ENCODE measurements at regions of chr4 and their contacts with region 1.

Region 1: DNA sequence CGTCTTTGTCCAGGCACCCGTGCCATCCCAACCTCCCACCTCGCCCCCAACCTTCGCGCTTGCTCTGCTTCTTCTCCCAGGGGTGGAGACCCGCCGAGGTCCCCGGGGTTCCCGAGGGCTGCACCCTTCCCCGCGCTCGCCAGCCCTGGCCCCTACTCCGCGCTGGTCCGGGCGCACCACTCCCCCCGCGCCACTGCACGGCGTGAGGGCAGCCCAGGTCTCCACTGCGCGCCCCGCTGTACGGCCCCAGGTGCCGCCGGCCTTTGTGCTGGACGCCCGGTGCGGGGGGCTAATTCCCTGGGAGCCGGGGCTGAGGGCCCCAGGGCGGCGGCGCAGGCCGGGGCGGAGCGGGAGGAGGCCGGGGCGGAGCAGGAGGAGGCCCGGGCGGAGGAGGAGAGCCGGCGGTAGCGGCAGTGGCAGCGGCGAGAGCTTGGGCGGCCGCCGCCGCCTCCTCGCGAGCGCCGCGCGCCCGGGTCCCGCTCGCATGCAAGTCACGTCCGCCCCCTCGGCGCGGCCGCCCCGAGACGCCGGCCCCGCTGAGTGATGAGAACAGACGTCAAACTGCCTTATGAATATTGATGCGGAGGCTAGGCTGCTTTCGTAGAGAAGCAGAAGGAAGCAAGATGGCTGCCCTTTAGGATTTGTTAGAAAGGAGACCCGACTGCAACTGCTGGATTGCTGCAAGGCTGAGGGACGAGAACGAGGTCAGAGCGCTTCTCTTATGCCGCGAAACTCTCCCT is at the start of gene TET2:
- DNase-seq: peak; percentile 86
- H3K4me3 Mint-ChIP-seq: peak within 1 kb of the TSS; percentile 99
- H3K27ac Mint-ChIP-seq: peak within 1 kb of the TSS; percentile 98
- H3K4me1 Mint-ChIP-seq: peaks cover 32% of the 10 kb centered on the region
- H3K27me3 Mint-ChIP-seq: no peaks in the 10 kb centered on the region
- total RNA-seq, gene TET2: 25.0 to 25.9 TPM

Region 2: GRCh38 chr4:105162123-105162796 is 15.8 kb after region 1 on chr4:
- CTCF ChIA-PET with region 1: no interaction called
- POLR2A ChIA-PET with region 1: interaction called, 13 read pairs
- DNase-seq: no peak
- H3K4me3 Mint-ChIP-seq: no peak overlapping the region
- H3K27ac Mint-ChIP-seq: no peak overlapping the region
- H3K4me1 Mint-ChIP-seq: no peaks in the 10 kb centered on the region
- H3K27me3 Mint-ChIP-seq: no peaks in the 10 kb centered on the region

Region 3: DNA sequence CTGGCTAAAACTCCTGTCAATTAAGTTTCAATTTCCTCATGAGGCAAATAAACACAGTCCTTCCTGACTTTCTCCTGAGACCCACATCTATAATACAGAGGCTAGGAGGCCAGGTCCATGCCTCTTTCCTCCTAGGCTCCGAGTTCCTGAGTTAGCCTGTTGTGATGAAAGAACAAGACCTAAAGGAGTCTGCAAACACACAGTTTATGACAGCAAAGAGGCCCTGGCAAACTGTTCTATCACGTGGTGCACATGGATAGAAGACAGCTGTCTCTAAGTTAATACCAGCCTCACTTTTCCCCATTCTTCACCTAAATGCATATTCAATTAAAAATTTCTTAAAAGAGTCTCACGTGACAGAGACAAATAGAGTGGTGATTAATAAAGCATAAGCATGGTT is 145.5 kb after region 1 on chr4:
- CTCF ChIA-PET with region 1: no interaction called
- POLR2A ChIA-PET with region 1: no interaction called
- DNase-seq: no peak
- H3K4me3 Mint-ChIP-seq: no peak overlapping the region
- H3K27ac Mint-ChIP-seq: no peak overlapping the region
- H3K4me1 Mint-ChIP-seq: peaks cover 5% of the 10 kb centered on the region
- H3K27me3 Mint-ChIP-seq: no peaks in the 10 kb centered on the region

Region 4: DNA sequence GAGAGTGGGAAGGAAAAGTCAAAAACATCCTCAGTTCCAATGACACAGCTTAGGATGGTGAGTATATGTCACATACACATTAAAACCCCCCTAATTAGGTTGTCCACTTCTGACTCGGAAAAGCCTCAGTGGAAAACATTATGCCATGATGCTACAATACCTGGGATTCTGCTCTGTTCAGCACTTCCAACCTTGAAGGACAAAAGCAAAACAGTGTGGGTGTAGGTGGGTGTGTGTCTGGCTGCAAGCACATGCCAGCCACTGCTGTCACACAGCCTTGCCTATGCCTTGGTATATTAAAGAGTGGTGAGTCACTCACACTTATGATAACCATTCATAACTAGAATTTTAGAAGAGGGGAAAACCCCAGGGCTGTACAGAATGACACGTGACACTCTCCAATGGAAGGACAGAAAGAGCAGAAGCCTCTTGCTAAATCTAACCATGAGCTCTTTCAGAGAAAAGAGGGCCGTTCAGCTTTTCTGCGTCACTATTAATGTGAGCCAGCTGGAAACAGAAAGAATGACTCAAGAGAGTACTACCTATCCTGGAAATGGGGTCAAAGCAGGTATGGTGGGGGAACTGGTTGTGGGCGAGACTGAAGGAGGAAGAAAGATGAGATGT is 159.8 kb after region 1 on chr4:
- CTCF ChIA-PET with region 1: interaction called, 4 read pairs
- POLR2A ChIA-PET with region 1: interaction called, 10 read pairs
- DNase-seq: peak; percentile 60
- H3K4me3 Mint-ChIP-seq: peak overlapping the region; percentile 28
- H3K27ac Mint-ChIP-seq: peak overlapping the region; percentile 79
- H3K4me1 Mint-ChIP-seq: peaks cover 26% of the 10 kb centered on the region
- H3K27me3 Mint-ChIP-seq: no peaks in the 10 kb centered on the region